ENCODE measurements at regions of chr1 and their contacts with region 1.

Region 1: DNA sequence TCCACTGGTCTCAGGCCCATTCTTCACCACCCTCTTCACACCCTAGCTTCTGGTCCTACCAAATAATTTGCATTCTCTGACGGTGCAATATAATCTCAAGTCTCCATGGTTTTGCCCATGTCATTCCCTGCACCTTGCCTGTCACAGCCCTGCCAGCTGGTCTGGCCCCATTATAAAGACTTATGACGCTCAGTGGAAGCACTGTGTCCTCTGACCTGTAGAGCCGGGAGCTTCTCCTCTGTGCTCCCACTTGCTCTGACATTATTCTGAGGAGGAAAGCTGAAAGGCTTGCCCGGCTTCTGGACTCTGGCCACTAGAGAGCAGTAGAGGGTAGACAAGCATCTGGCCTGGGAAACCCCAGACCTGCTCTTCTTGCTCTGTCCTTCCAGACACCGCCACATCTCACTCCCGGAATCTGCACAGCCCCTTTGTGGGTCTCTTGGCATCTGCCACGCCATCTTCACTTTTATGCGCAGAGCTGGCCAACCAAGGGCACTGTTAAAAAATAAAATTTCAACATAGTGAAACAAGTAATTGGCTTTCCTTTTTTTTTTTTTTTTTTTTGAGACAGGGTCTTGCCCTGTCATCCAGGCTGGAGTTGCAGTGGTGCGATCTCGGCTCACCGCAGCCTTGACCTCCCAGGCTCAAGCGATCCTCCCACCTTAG is 44.4 kb downstream of the NENF start:
- DNase-seq: peak; percentile 38
- H3K4me3 ChIP-seq: no peak overlapping the region
- CTCF ChIP-seq: peak; percentile 91

Region 2: DNA sequence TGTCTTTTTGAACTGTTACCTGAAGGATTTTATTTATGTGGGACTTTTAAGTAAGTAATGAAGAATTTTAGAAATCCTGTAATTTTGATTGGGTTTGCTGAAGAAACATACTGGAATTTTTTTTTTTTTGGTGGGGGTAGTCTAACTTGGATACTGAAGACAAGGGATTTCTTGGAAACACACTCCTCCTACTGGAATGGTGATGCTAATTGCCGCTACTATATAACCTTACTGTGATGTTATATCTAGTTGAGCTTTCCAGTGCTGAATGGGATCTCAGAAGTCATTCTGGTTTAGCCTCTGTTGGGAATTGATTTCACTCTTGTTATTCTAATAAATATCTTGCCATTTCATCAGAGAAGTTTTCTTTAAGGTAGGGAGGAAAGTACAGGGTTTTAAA is 183.6 kb before region 1 on chr1:
- CTCF ChIA-PET with region 1: no interaction called
- POLR2A ChIA-PET with region 1: no interaction called
- DNase-seq: no peak
- H3K4me3 ChIP-seq: no peak overlapping the region
- CTCF ChIP-seq: no peak

Region 3: DNA sequence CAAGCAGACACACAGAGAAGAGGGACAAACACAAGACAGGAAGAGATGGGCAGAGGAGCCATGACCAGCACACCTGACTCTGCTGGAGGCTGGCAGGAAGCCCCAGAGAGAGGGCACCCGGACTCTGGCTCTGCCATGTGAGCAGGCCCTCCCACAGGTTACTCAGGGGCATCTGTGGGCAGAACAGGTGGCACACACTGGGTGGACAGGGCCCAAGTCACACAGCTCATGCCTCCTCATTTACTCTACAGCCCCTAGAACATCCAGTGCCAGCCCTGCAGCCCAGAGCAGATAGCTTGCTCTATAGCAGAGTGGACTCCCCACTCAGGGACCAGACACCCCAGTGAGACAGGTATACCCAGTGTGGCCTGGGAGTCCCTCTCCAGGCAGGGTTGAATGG is 91.1 kb before region 1 on chr1:
- CTCF ChIA-PET with region 1: no interaction called
- POLR2A ChIA-PET with region 1: no interaction called
- DNase-seq: no peak
- H3K4me3 ChIP-seq: no peak overlapping the region
- CTCF ChIP-seq: no peak

Region 4: DNA sequence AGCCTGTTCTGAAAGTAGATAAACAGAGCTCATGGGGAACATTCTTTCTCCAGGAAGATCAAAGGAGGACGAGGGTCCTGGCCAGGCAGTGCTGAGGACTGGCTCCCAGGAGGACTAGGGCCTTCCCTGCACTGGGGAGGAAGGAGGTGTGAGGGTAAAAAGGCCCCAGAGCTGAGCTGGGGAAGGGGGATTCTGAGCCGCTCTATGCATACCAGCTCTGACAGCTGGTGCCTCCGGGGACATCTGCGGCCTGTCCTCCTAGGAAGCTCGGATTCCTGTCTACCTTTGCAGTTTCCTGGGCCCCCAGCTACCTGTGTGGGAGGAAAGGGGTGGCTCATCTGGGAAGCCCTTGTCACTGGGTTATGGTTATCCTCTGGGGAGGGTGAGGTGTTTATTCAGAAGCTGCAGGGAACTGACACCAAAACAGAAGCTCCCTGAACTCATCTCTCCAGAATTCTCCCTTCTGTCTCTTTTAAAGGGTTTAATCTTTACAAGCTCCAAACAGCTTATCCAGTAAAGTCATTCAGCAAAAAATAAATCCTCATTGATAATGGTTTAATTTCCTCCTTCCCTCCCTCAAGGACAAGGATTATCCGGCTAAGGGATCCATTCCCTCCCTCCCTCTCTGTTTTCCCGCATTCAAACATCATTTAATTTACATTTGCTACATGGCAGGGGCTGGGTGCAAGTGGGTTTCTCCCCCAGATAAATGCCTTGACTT is 13.4 kb before region 1 on chr1:
- CTCF ChIA-PET with region 1: interaction called, 59 read pairs
- POLR2A ChIA-PET with region 1: no interaction called
- DNase-seq: no peak
- H3K4me3 ChIP-seq: no peak overlapping the region
- CTCF ChIP-seq: no peak

Region 5: DNA sequence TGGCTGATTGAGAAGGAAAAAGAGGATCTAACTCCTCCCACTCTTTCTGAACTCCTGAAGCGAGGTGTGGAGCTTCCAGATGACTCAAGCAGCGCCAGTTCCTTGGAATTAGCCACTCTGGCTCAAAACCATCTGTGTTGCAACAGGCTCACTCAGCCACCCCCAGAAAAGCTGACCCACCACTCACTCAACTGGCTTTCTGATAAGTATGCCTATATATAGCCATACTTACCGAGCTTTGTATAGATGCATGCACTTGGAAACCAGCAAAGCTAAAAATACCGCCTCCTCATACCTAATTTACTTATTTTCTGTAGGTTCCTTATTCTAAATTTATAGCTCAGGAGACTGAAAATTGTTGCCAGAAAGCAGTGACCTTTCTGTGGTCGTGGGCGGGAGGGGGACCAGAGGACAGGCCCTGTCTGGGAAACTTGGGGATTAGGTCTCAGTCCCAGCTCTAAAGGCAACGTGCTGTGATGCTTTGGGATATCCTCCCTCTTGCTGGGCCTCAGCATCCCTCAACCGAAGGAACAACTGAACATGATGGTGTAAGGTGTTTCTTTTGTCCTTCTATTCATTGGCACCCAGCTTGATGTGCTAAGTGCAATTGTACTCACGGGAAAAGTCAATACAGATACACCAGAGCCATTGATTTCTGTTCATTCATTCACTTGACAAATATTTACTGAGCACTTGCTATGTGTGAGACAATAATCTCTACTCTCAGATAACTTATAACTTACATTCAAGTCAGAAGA is 21.3 kb after region 1 on chr1:
- CTCF ChIA-PET with region 1: interaction called, 38 read pairs
- POLR2A ChIA-PET with region 1: no interaction called
- DNase-seq: peak; percentile 66
- H3K4me3 ChIP-seq: no peak overlapping the region
- CTCF ChIP-seq: no peak

Region 6: GRCh38 chr1:212618501-212619405 is 141.6 kb after region 1 on chr1:
- CTCF ChIA-PET with region 1: interaction called, 14 read pairs
- POLR2A ChIA-PET with region 1: no interaction called
- DNase-seq: no peak
- H3K4me3 ChIP-seq: no peak overlapping the region
- CTCF ChIP-seq: no peak

Region 7: GRCh38 chr1:212760126-212760823 is 283.1 kb after region 1 on chr1:
- CTCF ChIA-PET with region 1: interaction called, 11 read pairs
- POLR2A ChIA-PET with region 1: no interaction called
- DNase-seq: no peak
- H3K4me3 ChIP-seq: no peak overlapping the region
- CTCF ChIP-seq: peak; percentile 29

Region 8: DNA sequence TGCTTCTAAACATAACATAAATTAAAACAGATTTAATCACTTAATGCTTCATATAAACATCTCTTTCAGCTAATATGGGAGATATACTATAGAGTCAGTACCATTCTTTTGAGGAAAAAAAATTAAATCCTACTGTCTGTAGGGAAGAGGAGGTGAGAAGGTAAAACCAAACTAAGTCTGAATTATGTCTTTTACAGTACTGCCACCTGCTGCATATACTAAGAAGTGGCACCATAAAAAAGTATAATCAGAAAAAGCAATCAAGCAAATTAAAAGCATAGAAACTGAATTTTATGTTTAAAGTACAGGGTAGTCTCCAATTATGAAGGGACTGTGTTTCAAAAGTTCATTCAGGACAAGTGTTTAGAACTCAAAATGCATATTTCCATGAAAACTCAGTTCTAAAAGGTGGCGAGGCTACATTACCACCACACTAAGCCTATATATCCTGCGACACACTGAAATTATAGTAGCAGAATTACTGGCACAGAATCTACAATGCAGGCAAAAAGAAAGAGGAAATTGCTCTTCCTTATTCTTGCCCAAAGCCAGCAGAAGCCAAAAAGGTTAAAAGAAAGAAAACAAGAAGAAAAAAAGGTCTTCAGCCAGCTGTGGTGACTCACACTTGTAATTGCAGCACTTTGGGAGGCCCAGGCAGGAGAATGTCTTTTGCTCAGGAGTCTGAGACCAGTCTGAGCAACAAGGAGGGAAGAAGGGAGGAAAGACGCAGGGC is 305.4 kb after region 1 on chr1:
- CTCF ChIA-PET with region 1: interaction called, 29 read pairs
- POLR2A ChIA-PET with region 1: no interaction called
- DNase-seq: no peak
- H3K4me3 ChIP-seq: no peak overlapping the region
- CTCF ChIP-seq: peak; percentile 36